ENCODE measurements at regions of chr15 and their contacts with region 1.

Region 1: GRCh38 chr15:88887068-88887580 is 8.2 kb downstream of the HAPLN3 start:
- DNase-seq: no peak
- H3K4me3 ChIP-seq: no peak overlapping the region
- H3K4me3 Mint-ChIP-seq: peak overlapping the region in 1 of 8 donors; percentile 9
- H3K27ac ChIP-seq: no peak overlapping the region
- H3K27ac Mint-ChIP-seq: peak overlapping the region in 1 of 7 donors; percentile 19
- H3K4me1 ChIP-seq: peaks cover 3% of the 10 kb centered on the region
- H3K4me1 Mint-ChIP-seq: peaks cover 5 to 27% (median 10%) of the 10 kb centered on the region in 4 donors
- H3K27me3 ChIP-seq: no peaks in the 10 kb centered on the region
- H3K27me3 Mint-ChIP-seq: no peaks in the 10 kb centered on the region

Region 2: DNA sequence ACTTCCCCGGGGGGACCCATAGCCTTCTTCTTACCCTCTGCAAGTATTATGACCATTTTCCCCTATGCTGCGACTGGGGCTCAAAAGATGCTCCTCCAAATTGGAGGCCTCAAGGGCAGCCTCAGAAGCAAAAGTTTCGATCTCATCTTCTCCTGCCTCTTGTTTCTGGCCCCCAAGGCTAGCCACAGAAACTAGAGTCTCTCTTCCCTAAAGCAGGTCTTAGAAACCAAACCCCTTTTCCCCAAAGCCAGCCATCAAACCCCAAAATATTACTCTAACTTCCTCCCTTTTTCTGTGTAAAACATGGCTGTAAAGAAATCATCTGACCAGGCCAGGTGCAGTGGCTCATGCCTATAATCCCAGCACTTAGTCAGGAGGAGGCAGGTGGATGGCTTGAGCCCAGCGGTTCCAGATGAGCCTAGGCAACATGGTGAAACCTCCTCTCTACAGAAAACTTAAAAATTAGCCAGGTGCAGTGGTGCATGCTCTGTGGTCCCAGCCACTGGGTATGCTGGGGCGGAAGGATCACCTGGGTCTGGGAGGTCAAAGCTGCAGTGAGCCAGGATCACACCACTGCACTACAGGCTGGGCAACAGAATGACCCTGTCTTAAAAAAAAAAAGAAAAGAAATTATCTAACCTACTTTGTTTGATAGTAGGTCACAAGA is 62.7 kb after region 1 on chr15:
- CTCF ChIA-PET with region 1: no interaction called
- POLR2A ChIA-PET with region 1: no interaction called
- intact Hi-C with region 1: no loop called
- DNase-seq: no peak
- H3K4me3 ChIP-seq: no peak overlapping the region
- H3K4me3 Mint-ChIP-seq: no peak overlapping the region
- H3K27ac ChIP-seq: no peak overlapping the region
- H3K27ac Mint-ChIP-seq: peak overlapping the region in 1 of 7 donors; percentile 35
- H3K4me1 ChIP-seq: no peaks in the 10 kb centered on the region
- H3K4me1 Mint-ChIP-seq: no peaks in the 10 kb centered on the region
- H3K27me3 ChIP-seq: no peaks in the 10 kb centered on the region
- H3K27me3 Mint-ChIP-seq: peaks cover 1 to 2% of the 10 kb centered on the region in 2 donors

Region 3: GRCh38 chr15:89017370-89018066 is 130.4 kb after region 1 on chr15:
- CTCF ChIA-PET with region 1: interaction called, 17 read pairs
- POLR2A ChIA-PET with region 1: interaction called, 4 read pairs
- intact Hi-C with region 1: no loop called
- DNase-seq: peak; percentile 80 to 84 (median 83)
- H3K4me3 ChIP-seq: peak overlapping the region in 1 of 2 donors; percentile 21
- H3K4me3 Mint-ChIP-seq: peak overlapping the region; percentile 17 to 75 (median 71)
- H3K27ac ChIP-seq: no peak overlapping the region
- H3K27ac Mint-ChIP-seq: peak overlapping the region; percentile 38 to 89 (median 72)
- H3K4me1 ChIP-seq: peaks cover 14% of the 10 kb centered on the region
- H3K4me1 Mint-ChIP-seq: peaks cover 13 to 19% (median 14%) of the 10 kb centered on the region in 4 donors
- H3K27me3 ChIP-seq: no peaks in the 10 kb centered on the region
- H3K27me3 Mint-ChIP-seq: peaks cover 0 to 1% of the 10 kb centered on the region in 2 donors

Region 4: GRCh38 chr15:89221543-89221942 is 334.4 kb after region 1 on chr15 and contains the start of gene RLBP1:
- CTCF ChIA-PET with region 1: no interaction called
- POLR2A ChIA-PET with region 1: no interaction called
- intact Hi-C with region 1: no loop called
- DNase-seq: no peak
- H3K4me3 ChIP-seq: no peak within 1 kb of the TSS
- H3K4me3 Mint-ChIP-seq: no peak within 1 kb of the TSS
- H3K27ac ChIP-seq: no peak within 1 kb of the TSS
- H3K27ac Mint-ChIP-seq: no peak within 1 kb of the TSS
- H3K4me1 ChIP-seq: no peaks in the 10 kb centered on the region
- H3K4me1 Mint-ChIP-seq: no peaks in the 10 kb centered on the region
- H3K27me3 ChIP-seq: no peaks in the 10 kb centered on the region
- H3K27me3 Mint-ChIP-seq: peaks cover 0 to 4% of the 10 kb centered on the region in 2 donors
- total RNA-seq, gene RLBP1: not detected

Measured in CD4-positive, alpha-beta memory T cell (primary cell).